Activated CD8-positive, alpha-beta T cell treated with anti-CD3 and anti-CD28 coated beads for 36 hours (primary cell): ENCODE measurements at regions of chr12 and their contacts with region 1.

Region 1: DNA sequence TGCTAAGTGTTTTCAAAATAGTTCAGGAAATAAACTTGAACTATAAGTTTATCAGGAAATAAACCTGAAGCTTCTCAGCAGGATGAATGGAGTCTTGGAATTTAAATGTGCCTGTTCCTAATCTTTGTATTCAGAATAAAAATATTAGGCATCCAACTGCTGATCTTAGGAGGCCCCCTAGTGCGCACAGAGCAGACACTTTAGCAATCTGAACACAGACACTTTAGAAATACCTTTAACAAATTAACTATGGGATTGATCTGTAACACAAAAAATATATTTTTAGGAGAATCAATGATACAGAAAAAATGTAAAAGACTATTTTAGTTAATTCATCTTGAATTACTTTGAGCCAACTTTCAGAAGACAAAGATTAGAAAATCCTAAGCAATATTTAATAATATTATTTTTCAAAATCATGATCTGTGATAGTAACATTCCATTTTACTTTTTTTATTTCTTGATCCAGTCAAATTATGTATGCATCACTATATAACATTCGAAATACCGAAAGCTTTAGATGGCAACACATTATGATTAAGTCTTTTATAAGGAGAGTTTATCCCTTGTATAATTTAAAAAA is 80.9 kb downstream of the SLC41A2 start:
- DNase-seq: peak; percentile 53
- ATAC-seq: peak; percentile 42
- H3K4me3 Mint-ChIP-seq: no peak overlapping the region
- H3K27ac Mint-ChIP-seq: no peak overlapping the region
- H3K4me1 Mint-ChIP-seq: peaks cover 2% of the 10 kb centered on the region
- H3K27me3 Mint-ChIP-seq: no peaks in the 10 kb centered on the region
- CTCF ChIP-seq: peak; percentile 71

Region 2: GRCh38 chr12:104702565-104703139 is 174.6 kb before region 1 on chr12:
- CTCF ChIA-PET with region 1: no interaction called
- POLR2A ChIA-PET with region 1: no interaction called
- intact Hi-C with region 1: no loop called
- DNase-seq: no peak
- ATAC-seq: no peak
- H3K4me3 Mint-ChIP-seq: no peak overlapping the region
- H3K27ac Mint-ChIP-seq: no peak overlapping the region
- H3K4me1 Mint-ChIP-seq: peaks cover 34% of the 10 kb centered on the region
- H3K27me3 Mint-ChIP-seq: no peaks in the 10 kb centered on the region
- CTCF ChIP-seq: no peak

Region 3: GRCh38 chr12:104814944-104815343 is 62.3 kb before region 1 on chr12:
- CTCF ChIA-PET with region 1: no interaction called
- POLR2A ChIA-PET with region 1: no interaction called
- intact Hi-C with region 1: no loop called
- DNase-seq: no peak
- ATAC-seq: no peak
- H3K4me3 Mint-ChIP-seq: no peak overlapping the region
- H3K27ac Mint-ChIP-seq: no peak overlapping the region
- H3K4me1 Mint-ChIP-seq: no peaks in the 10 kb centered on the region
- H3K27me3 Mint-ChIP-seq: no peaks in the 10 kb centered on the region
- CTCF ChIP-seq: no peak

Region 4: DNA sequence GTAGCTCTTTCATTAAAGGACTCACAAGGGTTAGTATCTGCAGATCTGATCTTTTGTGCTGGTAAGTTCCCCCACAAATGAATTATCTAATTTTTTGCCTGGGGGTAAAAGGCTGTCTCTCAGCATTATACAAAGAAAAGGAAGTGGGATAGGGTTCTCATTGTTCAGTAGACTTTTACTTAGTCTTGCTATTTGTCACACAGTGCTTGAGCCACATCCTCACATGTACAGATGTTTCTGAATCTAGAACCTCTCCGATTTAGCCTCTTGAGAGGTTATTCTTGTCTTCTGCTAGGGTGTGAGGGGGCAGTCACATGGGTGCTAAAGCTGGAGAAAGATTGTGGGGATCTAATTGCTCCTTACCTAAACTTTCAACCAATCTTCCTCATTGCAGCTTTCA is 12.1 kb before region 1 on chr12:
- CTCF ChIA-PET with region 1: interaction called, 10 read pairs
- POLR2A ChIA-PET with region 1: no interaction called
- intact Hi-C with region 1: no loop called
- DNase-seq: no peak
- ATAC-seq: peak; percentile 49
- H3K4me3 Mint-ChIP-seq: no peak overlapping the region
- H3K27ac Mint-ChIP-seq: no peak overlapping the region
- H3K4me1 Mint-ChIP-seq: peaks cover 11% of the 10 kb centered on the region
- H3K27me3 Mint-ChIP-seq: peaks cover 3% of the 10 kb centered on the region
- CTCF ChIP-seq: no peak

Region 5: DNA sequence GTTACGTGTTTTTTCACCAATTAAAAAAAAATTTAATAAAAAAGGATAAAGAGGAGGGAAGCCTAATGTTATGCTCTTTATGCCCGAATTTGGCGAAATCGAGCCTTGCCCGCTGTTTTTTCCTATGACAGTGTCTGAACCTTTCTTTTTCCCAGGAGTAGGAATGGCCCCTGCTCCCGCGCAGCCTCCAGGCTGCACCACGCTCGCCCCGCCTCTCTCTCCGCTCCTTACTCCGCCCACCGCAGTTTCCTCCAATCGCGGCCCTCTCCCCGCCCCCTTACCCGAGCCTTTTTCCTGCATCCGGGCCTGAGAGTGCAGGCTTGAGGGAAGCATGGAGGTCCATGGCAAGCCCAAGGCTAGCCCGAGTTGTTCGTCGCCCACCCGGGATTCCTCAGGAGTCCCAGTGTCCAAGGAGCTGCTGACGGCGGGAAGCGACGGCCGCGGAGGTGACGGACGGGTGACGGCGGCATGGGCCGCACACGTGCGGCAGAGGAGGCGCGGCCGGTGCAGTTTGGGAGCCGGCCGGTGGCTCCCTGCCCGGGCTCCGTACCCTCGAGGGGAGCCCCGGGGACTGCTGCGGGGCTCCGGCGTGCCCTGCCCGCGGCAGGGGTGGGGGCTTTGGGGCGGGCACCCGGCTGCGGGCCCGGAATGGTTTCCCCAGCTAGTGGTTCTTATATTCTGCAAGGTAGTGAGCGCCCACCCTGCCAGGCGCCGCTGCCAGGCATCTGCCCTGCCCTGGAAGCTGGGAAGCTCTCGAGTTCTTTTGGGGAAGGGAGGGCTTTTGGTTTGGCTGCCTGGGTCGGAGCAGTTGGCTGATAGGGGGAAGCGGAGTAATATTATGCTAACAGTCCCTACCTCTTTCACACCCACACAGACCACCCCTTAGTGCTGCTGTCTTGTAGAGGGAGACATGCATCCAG is 109.1 kb after region 1 on chr12 and contains the start of gene NOPCHAP1:
- CTCF ChIA-PET with region 1: no interaction called
- POLR2A ChIA-PET with region 1: no interaction called
- intact Hi-C with region 1: no loop called
- DNase-seq: peak; percentile 91
- ATAC-seq: peak; percentile 97
- H3K4me3 Mint-ChIP-seq: peak within 1 kb of the TSS; percentile 90
- H3K27ac Mint-ChIP-seq: peak within 1 kb of the TSS; percentile 75
- H3K4me1 Mint-ChIP-seq: peaks cover 44% of the 10 kb centered on the region
- H3K27me3 Mint-ChIP-seq: peaks cover 5% of the 10 kb centered on the region
- CTCF ChIP-seq: no peak
- total RNA-seq, gene NOPCHAP1: 39.4 to 42.0 TPM